ENCODE measurements at regions of chr1 and their contacts with region 1.

Region 1: DNA sequence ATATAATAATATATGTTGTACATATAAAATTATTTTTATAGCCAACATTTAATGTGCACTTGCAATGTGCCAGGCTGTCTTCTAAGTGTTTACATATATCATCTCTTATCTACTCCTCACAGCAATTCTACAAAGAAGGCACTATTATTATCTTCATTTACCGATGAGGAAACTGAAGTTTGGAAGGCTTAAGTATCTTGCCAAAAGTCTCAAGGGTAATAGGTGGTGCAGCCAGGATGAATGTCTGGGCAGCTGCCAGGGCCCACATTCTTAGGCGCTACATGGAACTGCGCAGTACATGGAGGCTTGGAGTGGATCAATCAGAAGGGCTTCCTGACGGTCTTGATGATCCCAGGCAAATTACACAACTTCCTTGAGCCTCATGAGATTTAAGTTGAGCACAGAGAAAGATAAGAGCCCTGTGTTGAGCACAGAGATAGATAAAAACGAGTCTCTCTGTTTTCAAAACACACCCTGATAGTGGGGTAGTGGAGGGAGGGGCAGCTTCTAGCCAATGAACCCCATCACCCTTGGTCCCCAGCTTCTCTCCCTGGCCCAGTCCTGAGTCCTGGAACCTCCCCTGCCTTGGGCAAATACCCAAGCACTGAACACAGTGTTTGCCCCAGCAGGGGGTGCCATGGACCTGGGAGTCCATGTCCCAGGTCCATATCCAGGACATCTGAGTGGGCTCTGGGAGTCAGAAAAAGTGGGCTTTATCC is 9.2 kb downstream of the POU3F1 start:
- DNase-seq: peak; percentile 60 to 75 (median 66)
- ATAC-seq: peak; percentile 81
- H3K4me3 ChIP-seq: no peak overlapping the region
- H3K27ac ChIP-seq: no peak overlapping the region
- H3K4me1 ChIP-seq: peaks cover 6 to 9% of the 10 kb centered on the region in 2 experiments; a peak in 4 of 5 replicates
- H3K27me3 ChIP-seq: peaks cover 12 to 22% of the 10 kb centered on the region in 2 experiments; a peak in 4 of 5 replicates
- CTCF ChIP-seq: peak; percentile 69 to 80 (median 70)
- EP300 ChIP-seq: no peak; the same call in 1 of the 2 replicates
- POLR2A ChIP-seq: no peak
- RAD21 ChIP-seq: peak; percentile 61 to 86

Region 2: GRCh38 chr1:37859507-37860345 is 177.7 kb before region 1 on chr1 and contains the start of gene MTF1:
- CTCF ChIA-PET with region 1: no interaction called
- POLR2A ChIA-PET with region 1: no interaction called
- in situ Hi-C with region 1: no loop called
- intact Hi-C with region 1: no loop called
- DNase-seq: peak; percentile 99 to 100 (median 99)
- ATAC-seq: peak; percentile 99
- H3K4me3 ChIP-seq: peak within 1 kb of the TSS; percentile 97
- H3K27ac ChIP-seq: peak within 1 kb of the TSS; percentile 81
- H3K4me1 ChIP-seq: peaks cover 21 to 22% of the 10 kb centered on the region in 2 experiments; a peak in 4 of 5 replicates
- H3K27me3 ChIP-seq: no peaks in the 10 kb centered on the region; a peak in 1 of 5 replicates
- CTCF ChIP-seq: peak; percentile 86 to 97 (median 90)
- EP300 ChIP-seq: 0 out of 2 replicates have a peak, but pooled peaks have one; percentile 4
- POLR2A ChIP-seq: peak; percentile 97
- RAD21 ChIP-seq: peak; percentile 66 to 85
- polyA plus RNA-seq, gene MTF1: 1.9 to 2.4 TPM

Region 3: DNA sequence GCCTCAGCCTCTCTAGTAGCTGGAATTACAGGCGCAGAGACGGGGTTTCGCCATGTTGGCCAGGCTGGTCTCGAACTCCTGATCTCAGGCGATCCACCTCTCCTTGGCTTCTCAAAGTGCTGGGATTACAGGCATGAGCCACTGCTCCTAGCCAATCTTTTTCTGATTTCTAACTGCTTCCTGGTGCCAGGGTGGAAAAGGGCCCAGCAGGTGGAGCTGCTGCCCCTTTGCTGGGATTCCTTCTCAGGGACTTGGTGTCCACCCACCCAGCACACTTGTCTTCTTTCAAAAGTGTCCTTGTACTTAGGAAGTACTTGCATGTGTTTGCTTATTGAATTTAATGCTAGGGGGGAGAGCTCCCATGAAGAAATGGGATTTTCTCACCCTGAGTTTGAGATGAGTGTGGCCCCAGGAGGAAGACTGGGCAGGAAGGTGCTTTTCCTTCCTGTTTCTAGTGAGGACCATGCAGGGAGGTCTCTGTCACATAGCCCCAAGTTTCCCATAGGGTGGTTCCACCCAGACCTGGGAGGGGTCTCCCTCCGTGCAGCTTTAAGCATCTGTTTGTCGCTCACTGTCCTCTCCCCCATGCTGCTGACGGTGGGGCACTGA is 10.7 kb before region 1 on chr1:
- CTCF ChIA-PET with region 1: no interaction called
- POLR2A ChIA-PET with region 1: interaction called, 43 read pairs
- in situ Hi-C with region 1: no loop called
- intact Hi-C with region 1: no loop called
- DNase-seq: peak in 2 of 4 experiments; percentile 58 to 65
- ATAC-seq: peak; percentile 69
- H3K4me3 ChIP-seq: no peak overlapping the region
- H3K27ac ChIP-seq: no peak overlapping the region
- H3K4me1 ChIP-seq: peaks cover 10 to 34% of the 10 kb centered on the region in 2 experiments; a peak in 4 of 5 replicates
- H3K27me3 ChIP-seq: no peaks in the 10 kb centered on the region
- CTCF ChIP-seq: peak; percentile 67 to 82 (median 77)
- EP300 ChIP-seq: no peak
- POLR2A ChIP-seq: no peak; the same call in 1 of the 2 replicates
- RAD21 ChIP-seq: peak; percentile 70 to 74

Region 4: DNA sequence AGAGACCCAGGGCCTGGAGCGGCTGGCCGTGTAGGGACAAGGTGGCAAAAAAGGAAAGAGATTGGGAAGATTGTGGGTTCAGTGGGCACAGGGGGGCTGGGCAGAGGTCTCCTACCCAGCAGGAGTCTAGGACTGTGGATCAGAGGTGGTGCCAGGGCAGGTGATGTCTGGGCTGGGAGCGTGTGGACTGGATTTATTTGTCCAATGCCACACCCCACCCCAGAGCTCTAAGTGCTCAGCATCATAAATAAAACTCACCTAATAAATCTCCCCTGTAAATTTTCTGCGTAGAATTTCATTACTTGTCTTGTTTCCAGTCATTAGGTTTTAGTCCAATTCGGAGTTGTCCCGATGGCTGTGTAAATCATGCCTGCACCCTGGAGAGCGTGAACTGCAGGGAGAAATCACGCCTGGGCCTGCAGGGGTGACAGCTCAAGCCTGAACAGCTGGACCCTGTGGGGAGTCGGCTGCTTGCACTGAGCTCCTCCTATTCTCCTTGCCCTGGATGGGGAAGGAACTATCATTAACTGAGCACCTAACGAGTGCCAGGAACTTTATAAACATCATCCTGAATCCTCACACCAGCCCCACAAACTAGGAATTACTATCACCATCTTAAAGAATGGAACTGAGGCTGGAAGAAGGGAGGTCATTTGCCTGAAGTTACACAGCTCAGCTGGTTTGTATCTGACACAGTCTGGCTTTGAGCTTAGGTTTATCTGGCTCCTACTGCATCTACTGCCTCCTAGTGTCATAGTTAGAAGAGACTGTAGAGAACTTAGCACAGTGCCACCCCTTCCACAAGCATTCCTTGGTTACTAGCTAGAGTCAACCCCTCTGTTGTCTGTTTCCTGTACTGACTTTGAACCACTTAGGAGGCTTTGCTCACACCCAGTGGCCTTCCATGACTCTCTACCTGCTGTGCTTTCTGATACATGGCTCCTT is 34.2 kb after region 1 on chr1:
- CTCF ChIA-PET with region 1: no interaction called
- POLR2A ChIA-PET with region 1: interaction called, 5 read pairs
- in situ Hi-C with region 1: no loop called
- intact Hi-C with region 1: loop called (anchors 5 kb)
- DNase-seq: peak; percentile 37 to 64 (median 46)
- ATAC-seq: peak; percentile 90
- H3K4me3 ChIP-seq: no peak overlapping the region
- H3K27ac ChIP-seq: no peak overlapping the region
- H3K4me1 ChIP-seq: peaks cover 0 to 11% of the 10 kb centered on the region in 2 experiments; a peak in 2 of 5 replicates
- H3K27me3 ChIP-seq: peaks cover 14 to 58% of the 10 kb centered on the region in 2 experiments; a peak in 4 of 5 replicates
- CTCF ChIP-seq: peak; percentile 57 to 79 (median 71)
- EP300 ChIP-seq: no peak
- POLR2A ChIP-seq: no peak
- RAD21 ChIP-seq: peak; percentile 31 to 72

Region 5: GRCh38 chr1:38088366-38088765 is 51.0 kb after region 1 on chr1:
- CTCF ChIA-PET with region 1: no interaction called
- POLR2A ChIA-PET with region 1: no interaction called
- in situ Hi-C with region 1: no loop called
- intact Hi-C with region 1: loop called (anchors 5 kb)
- DNase-seq: peak in 1 of 4 experiments; percentile 40
- ATAC-seq: peak; percentile 88
- H3K4me3 ChIP-seq: no peak overlapping the region
- H3K27ac ChIP-seq: no peak overlapping the region
- H3K4me1 ChIP-seq: no peaks in the 10 kb centered on the region; a peak in 1 of 5 replicates
- H3K27me3 ChIP-seq: peaks cover 33 to 64% of the 10 kb centered on the region in 2 experiments; a peak in 4 of 5 replicates
- CTCF ChIP-seq: peak; percentile 15 to 38 (median 34); a peak in 4 of 6 replicates
- EP300 ChIP-seq: no peak
- POLR2A ChIP-seq: no peak
- RAD21 ChIP-seq: peak in 1 of 2 experiments; percentile 36; a peak in 2 of 4 replicates

Region 6: GRCh38 chr1:38834937-38835827 is 797.8 kb after region 1 on chr1:
- CTCF ChIA-PET with region 1: no interaction called
- POLR2A ChIA-PET with region 1: no interaction called
- in situ Hi-C with region 1: loop called (anchors 5 kb)
- intact Hi-C with region 1: loop called (anchors 5 kb)
- DNase-seq: peak; percentile 71 to 92 (median 78)
- ATAC-seq: peak; percentile 98
- H3K4me3 ChIP-seq: no peak overlapping the region
- H3K27ac ChIP-seq: no peak overlapping the region
- H3K4me1 ChIP-seq: peaks cover 0 to 9% of the 10 kb centered on the region in 2 experiments; a peak in 2 of 5 replicates
- H3K27me3 ChIP-seq: 0 out of 5 replicates have a peak, but pooled peaks cover 0 to 3% of the 10 kb centered on the region in 2 experiments
- CTCF ChIP-seq: peak; percentile 79 to 91 (median 86)
- EP300 ChIP-seq: no peak
- POLR2A ChIP-seq: no peak
- RAD21 ChIP-seq: peak; percentile 91 to 98